ENCODE measurements at regions of chr2 and their contacts with region 1.

Region 1: DNA sequence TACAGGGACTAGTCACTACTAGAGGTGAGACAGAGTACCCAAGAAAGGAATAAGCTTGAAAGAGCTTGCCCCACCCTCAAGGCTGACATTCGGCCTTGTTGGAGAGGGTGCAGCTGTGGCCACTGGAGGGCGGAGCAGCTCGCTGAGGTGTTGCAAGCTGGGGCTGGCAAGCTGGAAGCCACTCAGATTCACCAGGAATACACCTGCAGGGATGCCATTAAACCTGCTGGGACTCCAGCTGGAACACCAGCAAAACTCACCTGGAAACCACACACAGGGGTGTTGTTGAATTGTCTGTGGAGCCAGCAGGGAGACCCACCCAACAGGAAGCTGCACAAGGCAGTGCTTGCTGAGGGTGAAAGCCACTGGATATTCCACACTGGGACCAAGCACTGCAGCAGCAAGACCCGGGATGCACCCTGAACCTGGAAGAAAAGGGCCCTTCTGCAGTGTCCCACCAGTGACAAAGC is 26.1 kb downstream of the KCTD18 start:
- DNase-seq: peak; percentile 53
- ATAC-seq: peak; percentile 54
- H3K4me3 Mint-ChIP-seq: no peak overlapping the region
- H3K27ac Mint-ChIP-seq: no peak overlapping the region
- H3K4me1 Mint-ChIP-seq: no peaks in the 10 kb centered on the region
- H3K27me3 Mint-ChIP-seq: no peaks in the 10 kb centered on the region

Region 2: DNA sequence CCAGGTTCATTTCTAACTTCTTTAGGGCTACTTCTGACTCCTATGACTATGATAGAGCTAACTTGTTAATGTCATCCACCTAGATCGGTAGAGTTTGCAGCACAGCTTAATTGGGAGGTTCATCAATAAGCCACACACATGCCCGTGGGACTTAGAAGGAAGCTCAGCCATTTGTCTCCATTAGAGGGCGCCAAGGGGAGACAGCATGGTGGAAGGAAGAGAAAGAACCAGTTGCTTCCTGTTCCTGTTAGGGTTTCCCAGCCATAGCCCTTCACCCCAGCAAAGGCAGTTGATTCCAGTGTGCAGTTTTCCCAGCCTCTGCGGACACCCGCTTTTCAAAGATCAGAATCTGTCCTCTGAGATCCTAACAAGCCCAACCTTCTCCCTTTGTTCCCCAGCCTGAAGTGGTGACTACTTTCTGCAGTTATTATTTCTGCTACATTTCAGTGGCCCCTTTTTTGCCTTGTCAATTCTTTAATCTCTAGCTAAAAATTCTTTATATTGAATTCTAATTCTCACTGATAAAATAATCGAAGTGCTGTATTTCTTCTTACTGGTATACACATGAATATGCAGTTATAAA is 498.0 kb before region 1 on chr2:
- CTCF ChIA-PET with region 1: interaction called, 49 read pairs
- POLR2A ChIA-PET with region 1: no interaction called
- DNase-seq: peak; percentile 78
- ATAC-seq: peak; percentile 85
- H3K4me3 Mint-ChIP-seq: no peak overlapping the region
- H3K27ac Mint-ChIP-seq: peak overlapping the region; percentile 32
- H3K4me1 Mint-ChIP-seq: peaks cover 5% of the 10 kb centered on the region
- H3K27me3 Mint-ChIP-seq: no peaks in the 10 kb centered on the region

Region 3: DNA sequence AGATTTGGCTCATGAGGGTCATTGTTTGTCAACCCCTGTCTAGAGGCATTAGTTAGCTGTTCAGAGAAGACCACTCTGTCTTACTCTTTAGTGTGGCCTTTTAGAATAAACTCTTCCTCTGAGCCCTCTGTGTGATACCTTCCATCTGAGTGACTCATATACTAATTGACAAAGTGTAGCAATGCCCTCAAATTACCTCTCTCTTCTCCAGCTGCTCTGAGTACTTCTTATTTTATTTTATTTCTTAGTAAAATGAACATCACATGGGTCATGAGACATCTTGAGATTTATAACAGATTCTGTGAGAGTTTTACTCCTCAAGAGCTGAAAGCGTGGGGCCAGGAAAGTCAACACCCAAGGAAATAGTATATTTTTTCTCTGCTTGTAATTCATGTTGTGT is 41.3 kb before region 1 on chr2:
- CTCF ChIA-PET with region 1: no interaction called
- POLR2A ChIA-PET with region 1: no interaction called
- DNase-seq: no peak
- ATAC-seq: no peak
- H3K4me3 Mint-ChIP-seq: no peak overlapping the region
- H3K27ac Mint-ChIP-seq: no peak overlapping the region
- H3K4me1 Mint-ChIP-seq: no peaks in the 10 kb centered on the region
- H3K27me3 Mint-ChIP-seq: no peaks in the 10 kb centered on the region

Region 4: GRCh38 chr2:200454927-200455801 is 28.6 kb before region 1 on chr2:
- CTCF ChIA-PET with region 1: interaction called, 12 read pairs
- POLR2A ChIA-PET with region 1: no interaction called
- DNase-seq: no peak
- ATAC-seq: no peak
- H3K4me3 Mint-ChIP-seq: no peak overlapping the region
- H3K27ac Mint-ChIP-seq: no peak overlapping the region
- H3K4me1 Mint-ChIP-seq: peaks cover 3% of the 10 kb centered on the region
- H3K27me3 Mint-ChIP-seq: no peaks in the 10 kb centered on the region

Region 5: GRCh38 chr2:200498402-200499162 is 14.8 kb after region 1 on chr2:
- CTCF ChIA-PET with region 1: interaction called, 32 read pairs
- POLR2A ChIA-PET with region 1: no interaction called
- DNase-seq: no peak
- ATAC-seq: no peak
- H3K4me3 Mint-ChIP-seq: no peak overlapping the region
- H3K27ac Mint-ChIP-seq: no peak overlapping the region
- H3K4me1 Mint-ChIP-seq: no peaks in the 10 kb centered on the region
- H3K27me3 Mint-ChIP-seq: no peaks in the 10 kb centered on the region

Region 6: DNA sequence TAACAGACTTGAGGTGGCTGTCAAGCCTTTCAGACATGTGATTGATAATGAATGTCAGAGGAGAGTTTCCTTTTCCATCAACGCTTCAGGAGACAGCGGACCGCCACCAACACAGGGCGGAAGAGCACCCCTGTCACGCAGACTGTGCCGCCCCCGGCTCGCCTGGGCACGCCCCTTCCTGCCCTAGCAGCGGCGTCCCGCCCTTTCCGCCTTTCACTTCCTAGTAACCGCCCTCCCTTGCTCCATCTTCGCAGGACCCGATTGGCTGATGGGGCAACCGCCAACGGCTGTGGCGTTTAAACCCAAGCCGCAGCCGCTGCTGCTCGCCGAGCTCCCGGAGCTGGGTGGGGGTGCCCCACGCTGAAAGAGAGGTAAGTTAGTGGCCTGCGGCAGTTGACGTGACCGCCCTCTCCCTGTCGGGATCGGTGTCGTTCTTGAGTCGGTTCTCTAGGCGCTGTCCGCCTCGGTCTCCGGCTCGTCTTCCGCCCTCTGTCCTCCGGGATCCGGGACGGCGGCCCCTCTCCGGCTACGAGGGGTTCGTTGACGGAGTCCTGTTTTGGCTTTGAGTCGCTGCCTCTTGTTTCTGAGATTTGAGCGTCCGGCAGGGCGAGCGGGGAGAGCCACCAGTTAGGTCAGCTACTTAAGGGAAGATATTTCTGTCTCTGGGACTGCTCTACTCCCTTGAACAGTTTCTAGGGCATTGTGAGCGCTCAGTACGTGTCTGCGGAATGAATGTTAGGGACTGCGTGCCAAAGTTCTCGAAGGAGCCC is 42.3 kb after region 1 on chr2 and contains the start of gene SGO2:
- CTCF ChIA-PET with region 1: interaction called, 11 read pairs
- POLR2A ChIA-PET with region 1: interaction called, 3 read pairs
- DNase-seq: peak; percentile 98
- ATAC-seq: peak; percentile 99
- H3K4me3 Mint-ChIP-seq: peak within 1 kb of the TSS; percentile 92
- H3K27ac Mint-ChIP-seq: peak within 1 kb of the TSS; percentile 91
- H3K4me1 Mint-ChIP-seq: peaks cover 31% of the 10 kb centered on the region
- H3K27me3 Mint-ChIP-seq: peaks cover 10% of the 10 kb centered on the region
- total RNA-seq, gene SGO2: 54.4 to 56.5 TPM

Region 7: DNA sequence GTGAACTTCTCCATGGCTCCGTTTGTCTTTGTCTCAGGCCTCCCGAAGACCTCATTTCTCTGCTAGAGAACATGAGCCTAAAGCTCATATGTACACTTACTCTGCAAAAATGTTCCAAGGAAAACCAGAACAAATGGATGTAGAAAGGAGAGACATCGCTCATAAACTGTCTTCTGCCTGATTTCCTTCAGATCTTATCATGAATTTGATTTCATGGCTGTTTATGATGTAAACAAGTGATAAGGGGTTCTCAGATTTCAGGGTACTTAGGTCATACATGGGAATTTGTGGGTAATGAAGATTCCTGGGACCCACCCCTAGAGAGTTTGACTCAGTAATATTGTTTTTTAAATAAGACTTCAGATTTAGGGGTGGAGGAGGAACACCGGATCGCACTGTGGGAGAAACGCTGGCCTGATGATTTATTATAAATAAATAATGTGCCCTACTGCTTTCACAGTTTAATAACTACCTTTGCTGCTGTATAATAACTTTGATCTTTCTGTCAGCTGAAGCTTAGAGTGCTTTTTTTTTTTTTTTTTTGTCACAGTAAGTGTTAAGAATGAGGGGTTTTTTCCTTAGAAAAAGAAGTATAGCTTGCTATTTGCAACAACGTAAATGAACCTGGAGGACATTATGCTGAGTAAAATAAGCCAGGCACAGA is 116.9 kb after region 1 on chr2:
- CTCF ChIA-PET with region 1: no interaction called
- POLR2A ChIA-PET with region 1: no interaction called
- DNase-seq: no peak
- ATAC-seq: no peak
- H3K4me3 Mint-ChIP-seq: no peak overlapping the region
- H3K27ac Mint-ChIP-seq: no peak overlapping the region
- H3K4me1 Mint-ChIP-seq: no peaks in the 10 kb centered on the region
- H3K27me3 Mint-ChIP-seq: peaks cover 14% of the 10 kb centered on the region

Measured in activated CD8-positive, alpha-beta T cell treated with anti-CD3 and anti-CD28 coated beads, Interleukin-2, amount 10 ng/mL, durations not matched to agents 7 days and 5 days (primary cell).